MCF 10A (cell line): ENCODE measurements at regions of chr5 and their contacts with region 1.

Region 1: GRCh38 chr5:74640450-74640953 is at the start of gene ENC1:
- DNase-seq: peak; percentile 87
- H3K4me3 Mint-ChIP-seq: peak within 1 kb of the TSS; percentile 87
- H3K27ac Mint-ChIP-seq: peak within 1 kb of the TSS; percentile 90
- H3K4me1 Mint-ChIP-seq: peaks cover 48% of the 10 kb centered on the region
- H3K27me3 Mint-ChIP-seq: no peaks in the 10 kb centered on the region
- CTCF ChIP-seq: peak; percentile 42
- total RNA-seq, gene ENC1: 10.7 and 12.9 TPM in 2 replicates

Region 2: DNA sequence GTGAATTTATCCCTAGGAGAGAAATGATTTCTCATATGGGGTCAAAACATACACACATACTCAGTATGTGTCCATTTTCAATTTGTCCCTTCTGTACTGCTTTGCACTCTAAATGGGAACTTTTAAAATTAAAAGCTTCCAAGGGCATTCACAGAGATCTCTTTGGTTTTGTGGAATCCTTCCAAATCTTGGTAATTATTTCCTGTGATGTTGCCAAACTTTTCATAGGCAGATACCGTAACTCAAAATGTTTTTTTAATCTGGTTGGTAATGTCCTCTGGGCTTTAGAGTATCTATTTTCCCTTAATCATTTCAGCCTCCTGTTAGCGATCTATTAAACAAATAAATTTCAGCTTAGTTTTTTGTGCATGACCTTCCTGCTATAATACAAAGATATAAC is 732.1 kb before region 1 on chr5:
- CTCF ChIA-PET with region 1: interaction called, 10 read pairs
- POLR2A ChIA-PET with region 1: interaction called, 34 read pairs
- intact Hi-C with region 1: no loop called
- DNase-seq: peak; percentile 32
- H3K4me3 Mint-ChIP-seq: no peak overlapping the region
- H3K27ac Mint-ChIP-seq: no peak overlapping the region
- H3K4me1 Mint-ChIP-seq: no peaks in the 10 kb centered on the region
- H3K27me3 Mint-ChIP-seq: no peaks in the 10 kb centered on the region
- CTCF ChIP-seq: no peak

Region 3: GRCh38 chr5:74035521-74035981 is 605.0 kb before region 1 on chr5:
- CTCF ChIA-PET with region 1: interaction called, 17 read pairs
- POLR2A ChIA-PET with region 1: interaction called, 55 read pairs
- intact Hi-C with region 1: loop called (anchors 1 kb)
- DNase-seq: peak; percentile 82
- H3K4me3 Mint-ChIP-seq: peak overlapping the region; percentile 66
- H3K27ac Mint-ChIP-seq: peak overlapping the region; percentile 11
- H3K4me1 Mint-ChIP-seq: peaks cover 37% of the 10 kb centered on the region
- H3K27me3 Mint-ChIP-seq: no peaks in the 10 kb centered on the region
- CTCF ChIP-seq: peak; percentile 45

Region 4: DNA sequence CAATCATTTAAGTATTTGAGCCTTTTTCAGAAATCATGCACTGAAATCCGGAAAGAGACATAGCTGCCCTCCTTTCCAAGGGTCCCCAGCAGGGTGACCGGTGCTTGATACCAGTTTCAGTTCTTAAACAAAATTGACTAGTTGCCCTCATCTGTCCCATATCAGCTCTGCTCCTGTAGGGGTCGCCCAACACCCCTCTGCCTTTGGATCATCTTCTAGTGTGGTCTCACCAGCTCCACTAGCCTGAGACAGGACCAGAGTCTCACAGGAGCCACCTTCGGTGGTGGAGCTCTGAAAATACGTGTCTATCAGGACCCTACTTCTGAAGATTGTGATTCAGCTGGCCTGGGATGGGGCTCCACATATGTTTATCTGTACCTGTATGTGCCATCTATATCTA is 428.2 kb before region 1 on chr5:
- CTCF ChIA-PET with region 1: interaction called, 5 read pairs
- POLR2A ChIA-PET with region 1: no interaction called
- intact Hi-C with region 1: loop called (anchors 1 kb)
- DNase-seq: peak; percentile 42
- H3K4me3 Mint-ChIP-seq: no peak overlapping the region
- H3K27ac Mint-ChIP-seq: no peak overlapping the region
- H3K4me1 Mint-ChIP-seq: peaks cover under 1% of the 10 kb centered on the region
- H3K27me3 Mint-ChIP-seq: no peaks in the 10 kb centered on the region
- CTCF ChIP-seq: peak; percentile 20

Region 5: GRCh38 chr5:74394916-74395781 is 245.4 kb before region 1 on chr5:
- CTCF ChIA-PET with region 1: interaction called, 5 read pairs
- POLR2A ChIA-PET with region 1: interaction called, 7 read pairs
- intact Hi-C with region 1: loop called (anchors 1 kb)
- DNase-seq: peak; percentile 86
- H3K4me3 Mint-ChIP-seq: no peak overlapping the region
- H3K27ac Mint-ChIP-seq: peak overlapping the region; percentile 73
- H3K4me1 Mint-ChIP-seq: peaks cover 36% of the 10 kb centered on the region
- H3K27me3 Mint-ChIP-seq: no peaks in the 10 kb centered on the region
- CTCF ChIP-seq: no peak

Region 6: DNA sequence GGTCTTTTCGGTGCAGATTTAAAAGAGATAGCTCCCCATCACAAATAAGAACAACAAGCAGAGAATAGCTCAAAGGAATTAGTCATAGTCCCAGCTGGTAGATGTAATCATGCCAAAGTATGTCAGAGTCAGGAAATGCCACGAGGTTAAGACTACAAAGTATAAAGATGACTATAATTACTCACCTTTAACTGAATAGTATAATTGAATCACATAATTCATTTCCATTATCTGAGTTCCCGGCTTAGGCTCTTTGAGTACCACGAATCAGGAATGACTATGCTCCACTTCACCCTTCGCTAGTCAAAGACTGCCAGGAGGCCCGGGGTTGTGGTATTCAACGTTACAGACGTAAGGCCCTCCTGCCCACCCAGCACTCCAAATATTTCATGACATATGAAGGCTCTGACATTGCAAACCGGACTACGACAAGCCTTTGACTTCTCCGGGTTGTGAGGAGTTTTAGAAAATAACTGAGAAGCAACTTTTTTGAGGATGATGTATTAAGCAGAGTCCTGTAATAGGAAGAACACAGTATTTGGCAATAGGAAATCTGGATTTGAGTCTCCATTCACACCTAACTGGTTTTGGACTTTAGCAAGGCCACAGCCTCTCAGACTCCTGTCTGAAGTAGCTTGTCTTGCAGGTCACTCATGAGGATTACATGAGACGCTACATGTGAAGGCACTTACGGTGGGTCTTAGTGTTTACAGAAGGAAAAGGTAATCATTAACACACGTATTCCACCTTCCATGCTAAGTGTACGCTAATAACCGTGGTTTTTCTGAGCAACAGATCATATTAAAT is 64.6 kb before region 1 on chr5:
- CTCF ChIA-PET with region 1: no interaction called
- POLR2A ChIA-PET with region 1: interaction called, 4 read pairs
- intact Hi-C with region 1: loop called (anchors 2 kb)
- DNase-seq: peak; percentile 81
- H3K4me3 Mint-ChIP-seq: no peak overlapping the region
- H3K27ac Mint-ChIP-seq: peak overlapping the region; percentile 35
- H3K4me1 Mint-ChIP-seq: peaks cover 10% of the 10 kb centered on the region
- H3K27me3 Mint-ChIP-seq: no peaks in the 10 kb centered on the region
- CTCF ChIP-seq: no peak

Region 7: GRCh38 chr5:74915488-74915887 is 275.0 kb after region 1 on chr5:
- CTCF ChIA-PET with region 1: no interaction called
- POLR2A ChIA-PET with region 1: no interaction called
- intact Hi-C with region 1: no loop called
- DNase-seq: no peak
- H3K4me3 Mint-ChIP-seq: no peak overlapping the region
- H3K27ac Mint-ChIP-seq: no peak overlapping the region
- H3K4me1 Mint-ChIP-seq: peaks cover 7% of the 10 kb centered on the region
- H3K27me3 Mint-ChIP-seq: peaks cover 6% of the 10 kb centered on the region
- CTCF ChIP-seq: no peak